ENCODE measurements at regions of chr4 and their contacts with region 1.

Region 1: DNA sequence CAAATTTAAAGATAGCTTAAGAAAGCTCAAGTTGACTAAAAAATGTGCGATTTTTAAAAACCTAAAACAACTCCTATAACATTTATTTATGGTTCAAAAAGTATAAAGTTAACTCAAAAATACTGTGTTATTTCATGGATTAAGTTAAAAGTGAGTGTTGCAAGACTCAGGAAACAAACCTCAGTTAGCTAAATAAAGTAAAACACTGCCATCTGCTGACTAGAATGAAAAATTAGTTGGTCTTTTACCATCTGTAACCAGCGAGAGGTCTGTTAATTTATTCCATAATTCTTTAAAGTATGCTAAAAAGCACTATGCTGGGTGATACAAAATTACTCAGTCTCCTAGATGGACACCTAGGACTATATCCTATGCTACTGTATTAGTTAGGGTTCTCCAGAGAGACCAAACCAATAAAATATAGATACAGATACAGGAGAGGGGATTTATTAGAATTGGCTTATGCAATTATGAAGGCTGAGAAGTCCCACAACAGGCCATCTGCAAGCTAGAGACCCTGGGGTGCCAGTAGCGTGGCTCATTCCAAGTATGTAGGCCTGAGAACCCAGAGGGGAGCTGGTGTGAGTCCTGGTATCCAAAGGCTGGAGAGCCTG is 4.9 kb upstream of the WDFY3 start:
- DNase-seq: no peak
- H3K4me3 ChIP-seq: no peak overlapping the region
- H3K27ac ChIP-seq: no peak overlapping the region
- H3K4me1 ChIP-seq: peaks cover 0 to 13% (median 7%) of the 10 kb centered on the region in 4 donors
- H3K27me3 ChIP-seq: no peaks in the 10 kb centered on the region
- CTCF ChIP-seq: peak; percentile 56 to 59 (median 57)
- EP300 ChIP-seq: no peak
- POLR2A ChIP-seq: no peak

Region 2: GRCh38 chr4:84740057-84740456 is 231.4 kb before region 1 on chr4:
- intact Hi-C with region 1: loop called (anchors 2 kb)
- DNase-seq: no peak
- H3K4me3 ChIP-seq: no peak overlapping the region
- H3K27ac ChIP-seq: no peak overlapping the region
- H3K4me1 ChIP-seq: no peaks in the 10 kb centered on the region
- H3K27me3 ChIP-seq: no peaks in the 10 kb centered on the region
- CTCF ChIP-seq: no peak
- EP300 ChIP-seq: no peak
- POLR2A ChIP-seq: no peak

Region 3: DNA sequence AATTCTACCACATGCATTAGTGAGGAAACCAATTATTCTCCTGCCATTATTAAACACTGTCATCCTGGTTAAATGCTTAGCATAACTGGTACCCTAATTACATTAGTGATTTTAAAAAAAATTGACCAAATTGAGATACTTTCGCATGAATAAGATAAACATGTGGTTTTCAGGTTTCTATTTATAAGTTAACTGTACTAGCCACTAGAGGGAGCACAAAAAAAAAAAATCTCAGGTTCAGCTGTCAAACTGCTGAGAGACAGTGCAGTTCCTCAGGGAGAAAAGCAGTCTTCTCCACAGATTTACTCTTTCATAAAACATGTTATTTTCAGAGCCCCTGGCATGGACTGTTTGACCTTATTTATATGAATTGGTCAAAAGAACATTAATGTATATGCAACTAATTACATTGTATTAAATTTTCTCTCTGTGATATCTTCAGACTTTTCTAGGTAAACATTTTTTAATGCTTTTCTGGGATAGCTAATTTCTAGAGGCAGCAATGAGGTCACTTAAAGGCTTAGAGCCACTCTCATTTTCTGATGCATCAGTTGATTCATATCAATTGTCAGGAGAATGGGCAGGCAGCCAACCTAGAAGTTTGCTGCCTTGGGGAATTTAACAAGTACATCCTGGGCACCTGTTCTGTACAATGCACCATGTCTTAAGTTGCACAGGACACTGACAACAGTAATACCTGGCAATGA is 221.0 kb before region 1 on chr4:
- intact Hi-C with region 1: loop called (anchors 1 kb)
- DNase-seq: no peak
- H3K4me3 ChIP-seq: no peak overlapping the region
- H3K27ac ChIP-seq: no peak overlapping the region
- H3K4me1 ChIP-seq: peaks cover 0 to 6% (median 0%) of the 10 kb centered on the region in 4 donors
- H3K27me3 ChIP-seq: no peaks in the 10 kb centered on the region
- CTCF ChIP-seq: peak; percentile 58 to 66 (median 61)
- EP300 ChIP-seq: no peak
- POLR2A ChIP-seq: no peak

Measured in esophagus muscularis mucosa (tissue), 4 donors.